Natural killer cell (primary cell): ENCODE measurements at regions of chr3 and their contacts with region 1.

Region 1: GRCh38 chr3:157081681-157082210 is 78.2 kb downstream of the CCNL1 start:
- DNase-seq: peak; percentile 80 to 90
- ATAC-seq: peak; percentile 90 to 99 (median 98)
- H3K4me3 ChIP-seq: no peak overlapping the region
- H3K4me3 Mint-ChIP-seq: no peak overlapping the region
- H3K27ac ChIP-seq: peak overlapping the region; percentile 48
- H3K27ac Mint-ChIP-seq: peak overlapping the region in 1 of 2 donors; percentile 65
- H3K4me1 ChIP-seq: peaks cover 10% of the 10 kb centered on the region
- H3K4me1 Mint-ChIP-seq: peaks cover 0 to 7% of the 10 kb centered on the region in 2 donors
- H3K27me3 ChIP-seq: no peaks in the 10 kb centered on the region
- H3K27me3 Mint-ChIP-seq: peaks cover 11 to 17% of the 10 kb centered on the region in 2 donors
- CTCF ChIP-seq: peak; percentile 98

Region 2: GRCh38 chr3:156040041-156040440 is 1041.7 kb before region 1 on chr3:
- intact Hi-C with region 1: loop called (anchors 5 kb)
- DNase-seq: no peak
- ATAC-seq: no peak
- H3K4me3 ChIP-seq: no peak overlapping the region
- H3K4me3 Mint-ChIP-seq: no peak overlapping the region
- H3K27ac ChIP-seq: no peak overlapping the region
- H3K27ac Mint-ChIP-seq: no peak overlapping the region
- H3K4me1 ChIP-seq: no peaks in the 10 kb centered on the region
- H3K4me1 Mint-ChIP-seq: no peaks in the 10 kb centered on the region
- H3K27me3 ChIP-seq: no peaks in the 10 kb centered on the region
- H3K27me3 Mint-ChIP-seq: peaks cover 0 to 14% of the 10 kb centered on the region in 2 donors
- CTCF ChIP-seq: no peak

Region 3: DNA sequence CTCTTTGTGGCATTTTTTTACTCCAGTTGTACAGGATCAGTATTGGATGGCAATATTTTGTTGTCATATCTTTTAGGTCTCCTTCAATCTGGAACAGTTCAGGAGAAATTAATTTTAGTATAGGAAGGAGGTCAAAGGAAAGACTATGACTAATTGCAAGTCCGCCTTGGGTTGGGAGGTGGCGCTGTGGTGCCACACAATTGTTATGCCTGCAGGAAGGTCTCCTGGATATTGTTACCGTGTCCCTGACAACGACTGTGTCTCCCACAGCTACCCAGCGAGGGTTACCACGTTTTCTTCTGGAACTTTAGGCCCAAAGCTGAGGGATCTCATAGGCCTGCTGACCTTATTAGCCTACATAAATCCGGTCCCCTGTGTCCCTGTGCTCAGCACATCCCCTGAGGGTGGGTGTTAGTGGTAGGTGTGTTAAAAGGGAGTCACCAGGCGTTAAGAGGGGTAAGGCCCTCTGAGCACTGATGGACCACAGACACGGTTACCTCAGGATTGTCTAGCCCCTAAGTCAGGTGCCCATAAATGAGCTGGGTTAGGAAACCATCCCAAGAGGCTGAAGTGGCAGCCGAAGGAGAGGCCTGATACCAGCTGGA is 929.8 kb before region 1 on chr3:
- intact Hi-C with region 1: loop called (anchors 1 kb)
- DNase-seq: peak; percentile 27 to 73
- ATAC-seq: peak in 2 of 3 donors; percentile 59 to 68
- H3K4me3 ChIP-seq: no peak overlapping the region
- H3K4me3 Mint-ChIP-seq: no peak overlapping the region
- H3K27ac ChIP-seq: no peak overlapping the region
- H3K27ac Mint-ChIP-seq: no peak overlapping the region
- H3K4me1 ChIP-seq: no peaks in the 10 kb centered on the region
- H3K4me1 Mint-ChIP-seq: no peaks in the 10 kb centered on the region
- H3K27me3 ChIP-seq: no peaks in the 10 kb centered on the region
- H3K27me3 Mint-ChIP-seq: peaks cover 0 to 12% of the 10 kb centered on the region in 2 donors
- CTCF ChIP-seq: peak; percentile 67

Region 4: GRCh38 chr3:156449712-156450574 is 631.8 kb before region 1 on chr3:
- intact Hi-C with region 1: loop called (anchors 2 kb)
- DNase-seq: peak in 1 of 2 donors; percentile 34
- ATAC-seq: peak in 1 of 3 donors; percentile 62
- H3K4me3 ChIP-seq: no peak overlapping the region
- H3K4me3 Mint-ChIP-seq: no peak overlapping the region
- H3K27ac ChIP-seq: no peak overlapping the region
- H3K27ac Mint-ChIP-seq: no peak overlapping the region
- H3K4me1 ChIP-seq: no peaks in the 10 kb centered on the region
- H3K4me1 Mint-ChIP-seq: no peaks in the 10 kb centered on the region
- H3K27me3 ChIP-seq: no peaks in the 10 kb centered on the region
- H3K27me3 Mint-ChIP-seq: peaks cover 11 to 16% of the 10 kb centered on the region in 2 donors
- CTCF ChIP-seq: peak; percentile 36

Region 5: DNA sequence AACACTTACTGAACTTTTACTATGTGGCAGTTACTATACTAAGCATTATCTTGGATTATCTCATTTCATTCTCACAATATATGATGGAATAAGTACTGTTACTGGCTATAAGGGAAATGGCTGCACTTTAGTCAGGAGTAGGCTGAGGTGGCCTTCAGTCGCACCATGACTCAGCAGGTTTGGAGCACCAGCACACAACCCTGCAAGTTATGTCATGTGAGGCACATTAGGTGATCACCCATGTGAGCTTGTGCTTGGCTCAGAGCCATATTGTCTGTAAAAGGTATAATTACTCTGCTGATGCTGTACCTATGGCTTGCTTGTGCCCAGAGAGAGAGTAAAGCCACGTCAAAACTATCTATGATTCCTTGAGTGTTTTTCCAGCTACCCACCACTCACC is 461.5 kb before region 1 on chr3:
- intact Hi-C with region 1: loop called (anchors 2 kb)
- DNase-seq: no peak
- ATAC-seq: no peak
- H3K4me3 ChIP-seq: no peak overlapping the region
- H3K4me3 Mint-ChIP-seq: no peak overlapping the region
- H3K27ac ChIP-seq: no peak overlapping the region
- H3K27ac Mint-ChIP-seq: no peak overlapping the region
- H3K4me1 ChIP-seq: no peaks in the 10 kb centered on the region
- H3K4me1 Mint-ChIP-seq: no peaks in the 10 kb centered on the region
- H3K27me3 ChIP-seq: no peaks in the 10 kb centered on the region
- H3K27me3 Mint-ChIP-seq: peaks cover 0 to 4% of the 10 kb centered on the region in 2 donors
- CTCF ChIP-seq: no peak

Region 6: GRCh38 chr3:156816800-156817645 is 264.7 kb before region 1 on chr3:
- intact Hi-C with region 1: loop called (anchors 5 kb)
- DNase-seq: peak; percentile 76 to 96
- ATAC-seq: peak; percentile 82 to 89 (median 85)
- H3K4me3 ChIP-seq: peak overlapping the region; percentile 55
- H3K4me3 Mint-ChIP-seq: peak overlapping the region; percentile 96
- H3K27ac ChIP-seq: peak overlapping the region; percentile 79
- H3K27ac Mint-ChIP-seq: peak overlapping the region; percentile 79 to 96
- H3K4me1 ChIP-seq: peaks cover 12% of the 10 kb centered on the region
- H3K4me1 Mint-ChIP-seq: peaks cover 31% of the 10 kb centered on the region in 2 donors
- H3K27me3 ChIP-seq: no peaks in the 10 kb centered on the region
- H3K27me3 Mint-ChIP-seq: no peaks in the 10 kb centered on the region
- CTCF ChIP-seq: no peak